ENCODE measurements at regions of chr2 and their contacts with region 1.

Region 1: GRCh38 chr2:121400201-121400600 is 115.2 kb upstream of the TFCP2L1 start:
- DNase-seq: no peak
- ATAC-seq: no peak
- H3K4me3 ChIP-seq: no peak overlapping the region
- H3K4me1 ChIP-seq: no peaks in the 10 kb centered on the region
- CTCF ChIP-seq: no peak

Region 2: GRCh38 chr2:121710470-121711170 is 310.4 kb after region 1 on chr2:
- intact Hi-C with region 1: loop called in 1 of 2 experiments (anchors 10 kb)
- DNase-seq: no peak
- ATAC-seq: no peak
- H3K4me3 ChIP-seq: no peak overlapping the region
- H3K4me1 ChIP-seq: peaks cover 8% of the 10 kb centered on the region
- CTCF ChIP-seq: no peak